MCF 10A (cell line): ENCODE measurements at regions of chr7 and their contacts with region 1.

Region 1: DNA sequence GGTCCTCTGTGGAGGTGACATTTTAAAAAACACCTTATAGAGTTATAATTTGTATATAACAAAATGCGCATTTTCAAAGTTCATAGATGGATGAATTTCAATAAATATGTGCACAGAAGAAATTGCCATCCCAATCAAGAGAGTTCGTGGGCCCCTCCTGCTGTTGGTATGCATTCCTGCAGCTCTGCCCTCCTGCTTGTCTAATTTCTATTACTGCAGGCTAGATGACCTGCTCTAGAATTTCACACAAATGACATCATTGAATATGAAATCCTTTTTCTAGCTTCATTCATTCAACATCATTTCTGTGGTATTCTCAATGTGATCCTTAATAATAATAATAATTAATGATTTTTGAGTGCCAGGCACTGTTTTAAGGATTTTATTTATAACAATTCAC is 348.2 kb downstream of the SDK1 start:
- DNase-seq: peak; percentile 24
- H3K4me3 Mint-ChIP-seq: no peak overlapping the region
- H3K27ac Mint-ChIP-seq: no peak overlapping the region
- H3K4me1 Mint-ChIP-seq: peaks cover 15% of the 10 kb centered on the region
- H3K27me3 Mint-ChIP-seq: no peaks in the 10 kb centered on the region
- CTCF ChIP-seq: peak; percentile 16

Region 2: DNA sequence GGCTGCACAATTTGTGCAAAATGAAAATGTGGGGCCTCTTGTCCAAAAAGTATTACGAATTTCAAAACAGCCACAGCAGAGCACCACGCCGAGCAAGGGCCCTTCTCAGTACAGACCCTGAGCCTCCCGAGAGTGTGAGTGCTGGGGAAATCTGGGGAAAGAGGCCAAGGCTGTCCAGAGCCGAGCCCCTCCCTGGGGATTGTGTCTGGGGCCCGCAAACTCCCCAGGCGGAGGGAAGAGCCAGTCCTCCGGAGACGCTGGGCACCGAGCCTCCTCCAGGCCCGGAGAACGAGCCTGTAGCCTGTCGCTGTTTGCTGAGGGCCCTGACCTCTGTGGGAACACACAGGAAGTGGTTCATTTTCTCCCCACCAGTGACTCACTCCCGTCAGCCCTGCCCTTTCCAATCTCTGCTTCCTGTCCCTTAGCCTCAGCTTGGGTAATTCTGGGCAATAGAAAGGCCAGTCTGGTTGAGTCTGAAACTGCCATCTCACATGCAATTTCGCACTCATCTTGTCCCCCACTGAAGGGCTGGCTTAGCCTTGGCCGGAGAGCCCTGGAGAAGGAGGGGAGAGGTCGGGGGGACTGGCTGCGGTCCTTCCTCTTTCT is 785.7 kb before region 1 on chr7:
- CTCF ChIA-PET with region 1: no interaction called
- POLR2A ChIA-PET with region 1: no interaction called
- intact Hi-C with region 1: loop called (anchors 2 kb)
- DNase-seq: peak; percentile 95
- H3K4me3 Mint-ChIP-seq: peak overlapping the region; percentile 72
- H3K27ac Mint-ChIP-seq: peak overlapping the region; percentile 98
- H3K4me1 Mint-ChIP-seq: peaks cover 14% of the 10 kb centered on the region
- H3K27me3 Mint-ChIP-seq: no peaks in the 10 kb centered on the region
- CTCF ChIP-seq: no peak

Region 3: DNA sequence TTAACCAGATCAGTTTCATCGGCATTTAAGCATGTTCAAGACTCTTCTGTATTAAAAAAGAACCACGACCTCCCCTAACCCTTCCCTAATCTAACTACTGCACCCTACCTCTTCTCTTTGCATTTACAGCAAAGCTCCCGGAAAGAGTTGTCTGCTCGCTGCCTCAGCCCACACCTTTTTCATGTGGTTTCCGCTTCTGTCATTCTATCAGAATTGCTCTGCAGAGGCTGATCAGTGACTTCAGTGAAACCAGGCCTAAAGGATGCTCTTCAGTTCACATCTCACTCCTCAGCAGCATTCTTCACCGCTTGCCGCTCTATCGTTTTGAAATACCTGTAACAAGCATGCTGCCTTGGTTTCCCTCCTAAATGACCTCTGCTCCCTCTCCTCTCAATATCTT is 187.3 kb before region 1 on chr7:
- CTCF ChIA-PET with region 1: no interaction called
- POLR2A ChIA-PET with region 1: no interaction called
- intact Hi-C with region 1: no loop called
- DNase-seq: no peak
- H3K4me3 Mint-ChIP-seq: no peak overlapping the region
- H3K27ac Mint-ChIP-seq: no peak overlapping the region
- H3K4me1 Mint-ChIP-seq: no peaks in the 10 kb centered on the region
- H3K27me3 Mint-ChIP-seq: no peaks in the 10 kb centered on the region
- CTCF ChIP-seq: no peak

Region 4: GRCh38 chr7:3482147-3482964 is 166.9 kb before region 1 on chr7:
- CTCF ChIA-PET with region 1: interaction called, 3 read pairs
- POLR2A ChIA-PET with region 1: no interaction called
- intact Hi-C with region 1: loop called (anchors 5 kb)
- DNase-seq: peak; percentile 64
- H3K4me3 Mint-ChIP-seq: no peak overlapping the region
- H3K27ac Mint-ChIP-seq: no peak overlapping the region
- H3K4me1 Mint-ChIP-seq: peaks cover 10% of the 10 kb centered on the region
- H3K27me3 Mint-ChIP-seq: no peaks in the 10 kb centered on the region
- CTCF ChIP-seq: peak; percentile 47